IMR-90 (cell line): ENCODE measurements at regions of chr22 and their contacts with region 1.

Region 1: GRCh38 chr22:30196141-30196879 is 50.2 kb downstream of the LIF start:
- DNase-seq: peak; percentile 100
- ATAC-seq: peak; percentile 83
- H3K4me3 ChIP-seq: no peak overlapping the region
- H3K27ac ChIP-seq: peak overlapping the region; percentile 89
- H3K4me1 ChIP-seq: peaks cover 25% of the 10 kb centered on the region
- H3K27me3 ChIP-seq: no peaks in the 10 kb centered on the region
- CTCF ChIP-seq: no peak
- POLR2A ChIP-seq: no peak
- RAD21 ChIP-seq: peak; percentile 28; the same call in 1 of the 2 replicates

Region 2: GRCh38 chr22:30116362-30117117 is 79.8 kb before region 1 on chr22:
- CTCF ChIA-PET with region 1: no interaction called
- POLR2A ChIA-PET with region 1: interaction called, 9 read pairs
- dilution Hi-C with region 1: no loop called
- in situ Hi-C with region 1: loop called (anchors 5 kb)
- intact Hi-C with region 1: loop called (anchors 2 kb)
- DNase-seq: peak; percentile 78
- ATAC-seq: peak; percentile 72
- H3K4me3 ChIP-seq: no peak overlapping the region
- H3K27ac ChIP-seq: no peak overlapping the region
- H3K4me1 ChIP-seq: peaks cover 12% of the 10 kb centered on the region
- H3K27me3 ChIP-seq: no peaks in the 10 kb centered on the region
- CTCF ChIP-seq: no peak
- POLR2A ChIP-seq: no peak
- RAD21 ChIP-seq: no peak

Region 3: GRCh38 chr22:30185129-30185528 is 11.2 kb before region 1 on chr22:
- CTCF ChIA-PET with region 1: interaction called, 3 read pairs
- POLR2A ChIA-PET with region 1: interaction called, 15 read pairs
- dilution Hi-C with region 1: no loop called
- in situ Hi-C with region 1: no loop called
- intact Hi-C with region 1: no loop called
- DNase-seq: peak; percentile 71
- ATAC-seq: peak; percentile 37
- H3K4me3 ChIP-seq: no peak overlapping the region
- H3K27ac ChIP-seq: peak overlapping the region; percentile 81
- H3K4me1 ChIP-seq: peaks cover 21% of the 10 kb centered on the region
- H3K27me3 ChIP-seq: no peaks in the 10 kb centered on the region
- CTCF ChIP-seq: no peak
- POLR2A ChIP-seq: 0 out of 2 replicates have a peak, but pooled peaks have one; percentile 35
- RAD21 ChIP-seq: no peak

Region 4: GRCh38 chr22:30235687-30236170 is 39.4 kb after region 1 on chr22:
- CTCF ChIA-PET with region 1: interaction called, 5 read pairs
- POLR2A ChIA-PET with region 1: interaction called, 3 read pairs
- dilution Hi-C with region 1: no loop called
- in situ Hi-C with region 1: no loop called
- intact Hi-C with region 1: loop called (anchors 5 kb)
- DNase-seq: peak; percentile 88
- ATAC-seq: peak; percentile 61
- H3K4me3 ChIP-seq: no peak overlapping the region
- H3K27ac ChIP-seq: peak overlapping the region; percentile 91
- H3K4me1 ChIP-seq: peaks cover 35% of the 10 kb centered on the region
- H3K27me3 ChIP-seq: no peaks in the 10 kb centered on the region
- CTCF ChIP-seq: no peak
- POLR2A ChIP-seq: no peak
- RAD21 ChIP-seq: no peak

Region 5: DNA sequence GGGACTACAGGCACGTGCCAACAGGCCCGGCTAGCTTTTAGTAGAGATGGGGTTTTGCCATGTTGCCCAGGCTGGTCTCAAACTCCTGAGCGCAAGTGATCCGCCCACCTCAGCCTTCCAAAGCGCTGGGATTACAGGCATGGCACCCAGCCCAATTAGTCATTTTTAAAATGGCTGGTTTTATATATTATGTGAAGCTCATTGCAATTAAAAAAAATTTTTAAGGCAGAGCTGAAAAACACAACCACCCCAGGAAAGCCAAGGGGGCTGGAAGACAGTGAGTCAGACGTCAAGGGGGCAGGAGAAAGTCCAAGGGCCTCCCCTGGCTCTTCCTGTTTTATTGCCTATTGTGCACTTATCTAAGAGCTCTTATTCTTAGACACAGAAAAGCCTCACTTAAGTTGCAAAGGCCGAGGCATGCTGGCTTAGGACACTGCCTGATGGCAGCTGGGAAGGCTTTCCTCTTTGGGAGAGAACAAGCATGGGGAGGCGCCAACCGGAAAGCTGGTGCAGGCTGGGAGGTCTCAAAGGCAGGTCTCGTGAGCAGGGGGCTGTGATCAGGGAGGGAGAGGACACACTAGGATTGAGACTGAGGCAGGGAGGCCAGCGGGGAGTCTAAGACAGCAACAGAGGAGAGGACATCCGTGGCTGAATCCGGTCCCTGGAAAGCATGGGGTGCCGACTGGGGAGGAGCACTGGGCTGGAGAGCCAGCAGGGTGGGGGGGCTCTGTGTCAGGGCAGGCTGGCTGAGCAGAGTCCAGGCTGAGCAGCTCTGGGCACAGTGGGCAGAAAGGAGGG is 81.4 kb after region 1 on chr22:
- CTCF ChIA-PET with region 1: no interaction called
- POLR2A ChIA-PET with region 1: no interaction called
- dilution Hi-C with region 1: no loop called
- in situ Hi-C with region 1: no loop called
- intact Hi-C with region 1: no loop called
- DNase-seq: peak; percentile 80
- ATAC-seq: peak; percentile 73
- H3K4me3 ChIP-seq: no peak overlapping the region
- H3K27ac ChIP-seq: peak overlapping the region; percentile 79
- H3K4me1 ChIP-seq: peaks cover 10% of the 10 kb centered on the region
- H3K27me3 ChIP-seq: no peaks in the 10 kb centered on the region
- CTCF ChIP-seq: no peak
- POLR2A ChIP-seq: no peak
- RAD21 ChIP-seq: no peak